A549 (cell line): ENCODE measurements at regions of chr4 and their contacts with region 1.

Region 1: GRCh38 chr4:41661442-41662076 is 87.0 kb downstream of the PHOX2B start:
- DNase-seq: peak; percentile 35 to 50
- ATAC-seq: peak; percentile 80 to 81
- H3K4me3 ChIP-seq: no peak overlapping the region
- H3K27ac ChIP-seq: peak overlapping the region; percentile 41 to 64; a peak in 4 of 6 replicates
- H3K4me1 ChIP-seq: peaks cover 22% of the 10 kb centered on the region; the same call in 2 of the 3 replicates
- CTCF ChIP-seq: peak; percentile 80
- EP300 ChIP-seq: no peak
- POLR2A ChIP-seq: no peak
- RAD21 ChIP-seq: peak; percentile 82 to 83

Region 2: GRCh38 chr4:41644288-41644914 is 17.2 kb before region 1 on chr4:
- CTCF ChIA-PET with region 1: interaction called, 21 read pairs
- POLR2A ChIA-PET with region 1: no interaction called
- DNase-seq: peak in 1 of 2 experiments; percentile 31
- ATAC-seq: peak in 1 of 2 experiments; percentile 79; a peak in 3 of 6 replicates
- H3K4me3 ChIP-seq: no peak overlapping the region
- H3K27ac ChIP-seq: peak overlapping the region in 1 of 2 experiments; percentile 39; a peak in 1 of 6 replicates
- H3K4me1 ChIP-seq: peaks cover 17% of the 10 kb centered on the region
- CTCF ChIP-seq: peak; percentile 30; the same call in 2 of the 3 replicates
- EP300 ChIP-seq: no peak
- POLR2A ChIP-seq: no peak
- RAD21 ChIP-seq: peak; percentile 29 to 32; a peak in 1 of 5 replicates

Region 3: DNA sequence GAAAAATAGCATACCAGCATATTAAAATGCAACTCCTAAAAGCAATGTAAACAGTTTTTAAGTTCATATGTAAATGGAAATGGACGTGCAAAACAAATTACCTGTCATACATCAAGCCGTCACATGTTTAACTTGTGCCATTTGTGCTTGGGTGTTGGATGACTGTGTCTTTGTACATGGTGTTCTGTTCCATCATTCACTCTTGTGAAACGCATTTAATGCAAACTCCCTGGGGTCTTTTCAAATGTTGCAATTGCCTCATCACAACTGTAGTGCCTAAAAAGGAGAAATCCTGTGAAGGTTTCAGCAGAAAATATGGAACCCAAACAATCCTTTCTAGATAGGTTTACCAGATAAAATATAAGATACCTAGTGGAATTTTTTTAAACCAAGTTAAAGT is 34.6 kb after region 1 on chr4:
- CTCF ChIA-PET with region 1: no interaction called
- POLR2A ChIA-PET with region 1: no interaction called
- DNase-seq: no peak
- ATAC-seq: no peak
- H3K4me3 ChIP-seq: no peak overlapping the region
- H3K27ac ChIP-seq: no peak overlapping the region; a peak in 1 of 6 replicates
- H3K4me1 ChIP-seq: no peaks in the 10 kb centered on the region; the same call in 2 of the 3 replicates
- CTCF ChIP-seq: no peak
- EP300 ChIP-seq: no peak
- POLR2A ChIP-seq: no peak
- RAD21 ChIP-seq: no peak